ENCODE measurements at regions of chr6 and their contacts with region 1.

Region 1: DNA sequence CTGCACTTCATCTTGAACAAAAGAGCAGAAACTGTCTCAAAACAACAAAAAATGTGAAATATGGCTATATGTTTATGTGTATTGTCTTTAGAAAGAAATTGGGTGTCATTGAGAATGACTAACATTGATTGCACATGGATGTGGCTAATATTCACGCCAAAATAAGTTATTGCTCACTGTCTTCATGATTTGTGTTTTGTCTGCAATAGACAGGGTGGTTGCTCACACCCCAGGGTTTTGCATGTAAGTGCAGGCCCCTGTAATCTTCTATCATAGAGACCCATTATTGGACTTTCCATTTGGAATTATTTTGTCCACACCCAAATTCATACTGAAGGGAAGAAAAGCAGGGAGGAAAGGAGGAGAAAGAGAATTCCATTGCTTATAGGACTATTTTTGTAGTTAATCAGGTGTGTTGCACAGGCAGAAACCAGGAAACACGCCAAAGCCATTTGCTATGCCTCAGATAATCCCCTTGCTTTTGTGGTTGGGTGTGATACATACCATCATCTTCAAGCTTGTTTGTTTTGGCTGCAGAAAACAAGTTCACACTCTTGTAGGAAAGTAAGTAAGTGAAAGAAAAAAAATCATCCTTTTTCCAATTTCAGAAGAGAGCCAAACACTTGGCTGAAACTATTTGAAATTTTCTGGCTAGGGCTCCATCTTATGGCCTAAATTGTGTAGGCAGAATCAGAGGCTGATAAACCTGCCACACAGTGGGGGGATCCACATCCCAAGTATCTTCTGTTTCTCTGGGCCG is 214.1 kb downstream of the COL12A1 start:
- DNase-seq: no peak
- H3K4me3 ChIP-seq: no peak overlapping the region
- H3K27ac ChIP-seq: no peak overlapping the region
- H3K4me1 ChIP-seq: no peaks in the 10 kb centered on the region
- H3K27me3 ChIP-seq: no peaks in the 10 kb centered on the region
- CTCF ChIP-seq: no peak

Region 2: GRCh38 chr6:74409447-74409846 is 582.3 kb before region 1 on chr6:
- intact Hi-C with region 1: loop called (anchors 10 kb)
- DNase-seq: no peak
- H3K4me3 ChIP-seq: no peak overlapping the region
- H3K27ac ChIP-seq: no peak overlapping the region
- H3K4me1 ChIP-seq: no peaks in the 10 kb centered on the region
- H3K27me3 ChIP-seq: no peaks in the 10 kb centered on the region
- CTCF ChIP-seq: peak; percentile 9 to 51 (median 39)

Region 3: GRCh38 chr6:74899416-74899815 is 92.3 kb before region 1 on chr6:
- intact Hi-C with region 1: no loop called
- DNase-seq: no peak
- H3K4me3 ChIP-seq: no peak overlapping the region
- H3K27ac ChIP-seq: no peak overlapping the region
- H3K4me1 ChIP-seq: no peaks in the 10 kb centered on the region
- H3K27me3 ChIP-seq: no peaks in the 10 kb centered on the region
- CTCF ChIP-seq: no peak

Region 4: DNA sequence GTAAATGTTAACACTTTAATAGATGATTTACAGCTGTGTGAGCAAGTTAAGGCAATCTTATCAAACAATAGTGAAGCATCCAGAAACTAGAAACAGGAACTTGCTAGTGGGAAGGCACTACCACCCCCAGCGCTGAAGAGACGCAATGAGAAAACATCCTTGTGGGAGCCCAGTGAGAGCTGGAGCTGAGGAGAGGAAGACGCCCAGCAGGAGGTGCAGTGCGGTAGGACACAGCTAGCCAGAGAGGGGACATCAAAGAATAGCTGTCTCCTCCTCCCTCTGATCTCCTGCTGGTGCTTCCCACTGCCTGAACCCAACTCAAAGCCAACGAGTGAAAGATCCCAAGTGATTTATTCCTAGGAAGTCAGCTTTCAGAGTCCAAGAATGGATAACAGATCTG is 73.8 kb after region 1 on chr6:
- intact Hi-C with region 1: no loop called
- DNase-seq: no peak
- H3K4me3 ChIP-seq: no peak overlapping the region
- H3K27ac ChIP-seq: no peak overlapping the region
- H3K4me1 ChIP-seq: no peaks in the 10 kb centered on the region
- H3K27me3 ChIP-seq: no peaks in the 10 kb centered on the region
- CTCF ChIP-seq: no peak